B cell (primary cell): ENCODE measurements at regions of chr11 and their contacts with region 1.

Region 1: GRCh38 chr11:60334005-60334620 is 7.1 kb downstream of the MS4A6E start:
- DNase-seq: peak; percentile 85
- ATAC-seq: peak; percentile 96
- H3K4me3 ChIP-seq: no peak overlapping the region
- H3K4me3 Mint-ChIP-seq: no peak overlapping the region
- H3K27ac ChIP-seq: no peak overlapping the region
- H3K27ac Mint-ChIP-seq: no peak overlapping the region
- H3K4me1 ChIP-seq: peaks cover 9 to 12% of the 10 kb centered on the region in 2 donors
- H3K4me1 Mint-ChIP-seq: peaks cover 13% of the 10 kb centered on the region
- H3K27me3 ChIP-seq: no peaks in the 10 kb centered on the region
- H3K27me3 Mint-ChIP-seq: no peaks in the 10 kb centered on the region
- CTCF ChIP-seq: peak; percentile 91

Region 2: GRCh38 chr11:60485986-60486385 is 151.9 kb after region 1 on chr11:
- CTCF ChIA-PET with region 1: interaction called, 22 read pairs
- POLR2A ChIA-PET with region 1: no interaction called
- intact Hi-C with region 1: loop called (anchors 1 kb)
- DNase-seq: peak; percentile 88
- ATAC-seq: peak; percentile 93
- H3K4me3 ChIP-seq: no peak overlapping the region
- H3K4me3 Mint-ChIP-seq: no peak overlapping the region
- H3K27ac ChIP-seq: no peak overlapping the region
- H3K27ac Mint-ChIP-seq: peak overlapping the region; percentile 4
- H3K4me1 ChIP-seq: peaks cover 39 to 47% of the 10 kb centered on the region in 2 donors
- H3K4me1 Mint-ChIP-seq: peaks cover 54% of the 10 kb centered on the region
- H3K27me3 ChIP-seq: no peaks in the 10 kb centered on the region
- H3K27me3 Mint-ChIP-seq: no peaks in the 10 kb centered on the region
- CTCF ChIP-seq: peak; percentile 96

Region 3: DNA sequence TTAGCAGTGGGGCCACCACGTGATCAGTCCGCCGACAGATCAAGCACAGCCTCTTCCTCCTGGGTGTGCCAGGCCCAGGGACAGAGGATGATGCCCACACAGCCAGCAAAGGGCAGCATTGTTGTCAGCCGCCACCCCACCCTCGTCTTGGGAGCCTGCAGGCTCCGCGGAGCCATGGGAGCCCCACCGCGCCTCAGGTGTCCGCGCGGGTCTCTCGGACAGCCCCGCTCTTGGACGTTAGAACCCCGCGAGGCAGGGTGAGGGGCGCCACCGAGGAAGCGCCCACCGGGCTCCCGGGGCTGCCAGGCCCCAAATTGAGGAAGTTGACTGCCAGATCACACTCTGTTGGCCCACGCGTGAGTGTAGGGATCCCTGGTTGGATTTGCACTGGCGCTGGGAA is 281.4 kb after region 1 on chr11:
- CTCF ChIA-PET with region 1: interaction called, 60 read pairs
- POLR2A ChIA-PET with region 1: no interaction called
- intact Hi-C with region 1: loop called (anchors 1 kb)
- DNase-seq: no peak
- ATAC-seq: no peak
- H3K4me3 ChIP-seq: no peak overlapping the region
- H3K4me3 Mint-ChIP-seq: no peak overlapping the region
- H3K27ac ChIP-seq: no peak overlapping the region
- H3K27ac Mint-ChIP-seq: no peak overlapping the region
- H3K4me1 ChIP-seq: peaks cover 0 to 7% of the 10 kb centered on the region in 2 donors
- H3K4me1 Mint-ChIP-seq: peaks cover 7% of the 10 kb centered on the region
- H3K27me3 ChIP-seq: no peaks in the 10 kb centered on the region
- H3K27me3 Mint-ChIP-seq: peaks cover 8% of the 10 kb centered on the region
- CTCF ChIP-seq: no peak

Region 4: GRCh38 chr11:60625262-60625661 is 291.1 kb after region 1 on chr11:
- CTCF ChIA-PET with region 1: interaction called, 60 read pairs
- POLR2A ChIA-PET with region 1: no interaction called
- intact Hi-C with region 1: no loop called
- DNase-seq: no peak
- ATAC-seq: no peak
- H3K4me3 ChIP-seq: no peak overlapping the region
- H3K4me3 Mint-ChIP-seq: no peak overlapping the region
- H3K27ac ChIP-seq: no peak overlapping the region
- H3K27ac Mint-ChIP-seq: no peak overlapping the region
- H3K4me1 ChIP-seq: no peaks in the 10 kb centered on the region
- H3K4me1 Mint-ChIP-seq: peaks cover 7% of the 10 kb centered on the region
- H3K27me3 ChIP-seq: no peaks in the 10 kb centered on the region
- H3K27me3 Mint-ChIP-seq: no peaks in the 10 kb centered on the region
- CTCF ChIP-seq: no peak

Region 5: DNA sequence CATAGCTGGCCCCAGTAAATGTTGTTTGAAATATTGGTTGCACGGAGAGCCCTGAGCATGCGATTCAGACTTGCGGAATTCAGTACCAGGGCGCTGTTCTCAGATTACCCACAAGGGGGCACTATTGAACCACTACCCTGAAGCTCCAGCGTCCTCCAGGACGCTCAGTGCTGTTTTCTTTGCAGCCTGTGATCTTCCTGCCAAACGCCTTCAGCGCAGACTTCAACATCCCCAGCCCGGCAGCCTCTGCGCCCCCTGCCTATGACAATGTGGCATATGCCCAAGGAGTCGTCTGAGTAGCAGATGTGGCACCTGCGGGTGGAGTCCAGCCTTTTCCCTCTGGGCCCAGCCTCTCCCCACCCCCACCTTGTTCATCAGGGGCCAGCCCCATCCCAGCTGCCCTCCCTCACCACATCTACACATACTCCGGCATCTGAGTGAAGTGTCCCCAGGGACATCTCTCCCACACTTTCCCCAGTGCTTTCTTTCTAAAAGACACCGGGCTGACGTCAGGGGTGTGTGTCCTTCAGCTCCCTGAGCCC is 441.4 kb after region 1 on chr11:
- CTCF ChIA-PET with region 1: interaction called, 5 read pairs
- POLR2A ChIA-PET with region 1: no interaction called
- intact Hi-C with region 1: loop called (anchors 1 kb)
- DNase-seq: peak; percentile 89
- ATAC-seq: peak; percentile 96
- H3K4me3 ChIP-seq: no peak overlapping the region
- H3K4me3 Mint-ChIP-seq: no peak overlapping the region
- H3K27ac ChIP-seq: no peak overlapping the region
- H3K27ac Mint-ChIP-seq: peak overlapping the region; percentile 1
- H3K4me1 ChIP-seq: peaks cover 3 to 11% of the 10 kb centered on the region in 2 donors
- H3K4me1 Mint-ChIP-seq: peaks cover 15% of the 10 kb centered on the region
- H3K27me3 ChIP-seq: peaks cover 0 to 9% (median 1%) of the 10 kb centered on the region in 4 experiments
- H3K27me3 Mint-ChIP-seq: peaks cover 12% of the 10 kb centered on the region
- CTCF ChIP-seq: peak; percentile 88